Psoas muscle (tissue), 8 donors: ENCODE measurements at regions of chr1 and their contacts with region 1.

Region 1: GRCh38 chr1:40612345-40612831 is 53.1 kb downstream of the RIMS3 start:
- DNase-seq: peak in 1 of 2 donors; percentile 27
- ATAC-seq: peak; percentile 75 to 95 (median 93)
- H3K4me3 ChIP-seq: no peak overlapping the region
- H3K27ac ChIP-seq: no peak overlapping the region
- H3K4me1 ChIP-seq: no peaks in the 10 kb centered on the region
- H3K27me3 ChIP-seq: no peaks in the 10 kb centered on the region
- CTCF ChIP-seq: peak; percentile 86

Region 2: DNA sequence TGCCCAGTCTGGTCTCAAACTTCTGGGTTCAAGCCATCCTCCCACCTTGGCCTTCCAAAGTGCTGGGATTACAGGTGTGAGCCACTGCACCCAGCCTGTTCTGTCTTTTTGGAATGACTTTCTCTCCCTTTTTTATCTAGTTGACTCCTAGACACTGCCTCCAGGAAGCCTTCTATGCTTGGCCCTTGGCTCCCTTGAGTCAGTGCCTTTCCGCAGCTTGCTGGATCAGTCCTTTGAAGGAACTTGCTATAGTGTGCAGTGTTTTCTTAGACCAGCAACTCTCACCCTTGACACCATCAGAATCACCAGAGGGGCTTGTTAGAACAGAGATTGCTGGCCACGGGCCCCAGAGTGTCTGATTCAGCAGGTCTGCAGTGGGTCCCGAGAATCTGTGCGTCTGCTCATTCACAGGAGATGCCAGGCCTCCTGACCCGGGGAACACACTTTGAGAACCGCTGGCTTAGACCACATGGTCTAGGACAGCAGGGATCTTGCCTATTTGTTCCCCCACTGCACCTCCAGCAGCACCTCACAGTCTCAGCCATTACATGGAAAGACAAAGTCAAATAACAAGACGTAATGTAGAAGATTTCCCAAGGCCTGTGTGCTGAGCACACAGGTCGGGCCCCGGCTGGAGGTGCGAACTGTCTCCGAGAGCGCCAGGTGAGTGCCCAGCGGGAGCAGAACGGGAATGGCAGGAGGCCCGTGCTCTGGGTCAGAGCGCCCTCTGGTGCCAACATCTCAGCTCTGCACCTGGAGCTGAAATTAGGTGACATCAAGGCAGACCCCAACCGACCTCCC is 339.8 kb after region 1 on chr1:
- intact Hi-C with region 1: loop called (anchors 1 to 5 kb)
- DNase-seq: peak; percentile 59 to 79
- ATAC-seq: peak; percentile 83 to 92 (median 86)
- H3K4me3 ChIP-seq: no peak overlapping the region
- H3K27ac ChIP-seq: no peak overlapping the region
- H3K4me1 ChIP-seq: no peaks in the 10 kb centered on the region
- H3K27me3 ChIP-seq: peaks cover 0 to 16% (median 0%) of the 10 kb centered on the region in 3 donors
- CTCF ChIP-seq: peak; percentile 90